ENCODE measurements at regions of chr4 and their contacts with region 1.

Region 1: GRCh38 chr4:155639704-155640523 is 26.7 kb upstream of the GUCY1A1 start:
- DNase-seq: peak; percentile 6
- H3K4me3 Mint-ChIP-seq: peak overlapping the region; percentile 50
- H3K27ac Mint-ChIP-seq: peak overlapping the region; percentile 79
- H3K4me1 Mint-ChIP-seq: peaks cover 21% of the 10 kb centered on the region
- H3K27me3 Mint-ChIP-seq: peaks cover 5% of the 10 kb centered on the region

Region 2: DNA sequence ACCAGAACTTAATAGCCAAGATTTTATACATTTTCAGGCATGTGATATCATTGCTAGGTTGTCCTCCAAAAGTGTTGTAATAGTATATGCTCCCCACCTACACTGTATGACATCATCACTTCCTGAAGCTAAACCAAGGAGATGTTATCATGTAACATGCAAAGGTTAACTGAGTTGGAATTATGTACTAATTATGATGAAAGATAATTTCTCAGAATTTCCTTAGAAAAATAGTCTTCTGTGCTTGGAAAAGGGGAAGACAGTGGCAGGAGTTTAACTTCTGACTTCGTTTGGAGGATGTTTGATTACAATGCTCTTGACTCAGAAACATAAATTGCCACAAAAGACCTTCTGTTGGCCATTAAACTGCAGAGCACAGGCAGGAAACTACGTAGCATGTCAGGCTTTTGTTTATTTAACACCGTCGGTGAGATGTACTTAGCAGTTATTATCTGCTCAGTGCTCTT is 56.9 kb before region 1 on chr4:
- intact Hi-C with region 1: loop called (anchors 2 kb)
- DNase-seq: no peak
- H3K4me3 Mint-ChIP-seq: peak overlapping the region; percentile 6
- H3K27ac Mint-ChIP-seq: peak overlapping the region; percentile 79
- H3K4me1 Mint-ChIP-seq: peaks cover 12% of the 10 kb centered on the region
- H3K27me3 Mint-ChIP-seq: peaks cover 3% of the 10 kb centered on the region